ENCODE measurements at regions of chr12 and their contacts with region 1.

Region 1: DNA sequence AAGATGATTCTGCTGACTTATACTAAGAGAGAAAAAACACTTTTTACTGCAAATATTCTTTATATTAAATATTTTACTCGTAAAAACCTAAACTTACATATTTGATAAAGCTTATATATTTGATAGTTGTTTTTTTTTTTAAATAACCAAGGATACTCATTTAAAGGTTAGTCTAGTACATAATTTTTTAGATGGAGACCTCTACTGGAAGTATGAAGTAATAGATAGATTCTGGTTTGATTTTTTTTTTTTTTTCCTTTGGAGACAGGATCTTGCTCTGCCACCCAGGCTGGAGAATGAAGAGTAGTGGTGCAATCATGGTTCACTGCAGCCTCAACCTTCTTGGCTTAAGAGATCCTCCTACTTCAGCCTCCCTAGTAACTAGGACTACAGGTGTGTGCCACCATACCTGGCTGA is 16.4 kb downstream of the ARID2 start:
- DNase-seq: peak; percentile 25 to 45 (median 39)
- H3K4me3 ChIP-seq: no peak overlapping the region
- H3K27ac ChIP-seq: no peak overlapping the region
- H3K4me1 ChIP-seq: no peaks in the 10 kb centered on the region
- H3K27me3 ChIP-seq: no peaks in the 10 kb centered on the region

Region 2: GRCh38 chr12:45518291-45519235 is 227.3 kb before region 1 on chr12:
- CTCF ChIA-PET with region 1: no interaction called
- POLR2A ChIA-PET with region 1: no interaction called
- DNase-seq: peak in 2 of 3 donors; percentile 53 to 64
- H3K4me3 ChIP-seq: peak overlapping the region in 1 of 7 experiments; percentile 42
- H3K27ac ChIP-seq: no peak overlapping the region
- H3K4me1 ChIP-seq: peaks cover 0 to 10% (median 9%) of the 10 kb centered on the region in 4 experiments
- H3K27me3 ChIP-seq: no peaks in the 10 kb centered on the region

Region 3: DNA sequence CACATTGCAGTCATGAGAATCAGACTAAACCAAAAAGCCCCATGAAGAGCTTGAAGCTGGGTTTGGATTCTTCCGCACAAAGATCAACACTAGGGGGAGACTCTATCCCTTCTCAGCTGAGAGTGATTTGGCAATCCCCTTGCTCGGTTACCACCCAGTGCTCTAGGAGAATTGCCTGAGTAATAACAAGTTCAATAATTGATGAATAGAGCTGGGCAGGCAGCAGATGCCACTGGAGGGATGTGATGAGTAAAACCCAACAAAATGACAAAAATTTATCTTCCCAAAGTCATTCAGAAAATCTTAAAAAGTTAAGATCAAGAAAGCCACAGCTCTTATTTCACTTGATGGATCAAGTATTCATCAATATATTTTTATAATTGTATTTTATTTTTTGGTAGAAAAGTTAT is 202.0 kb before region 1 on chr12:
- CTCF ChIA-PET with region 1: interaction called, 52 read pairs
- POLR2A ChIA-PET with region 1: no interaction called
- DNase-seq: peak; percentile 85 to 90 (median 88)
- H3K4me3 ChIP-seq: no peak overlapping the region
- H3K27ac ChIP-seq: no peak overlapping the region
- H3K4me1 ChIP-seq: no peaks in the 10 kb centered on the region
- H3K27me3 ChIP-seq: no peaks in the 10 kb centered on the region

Region 4: DNA sequence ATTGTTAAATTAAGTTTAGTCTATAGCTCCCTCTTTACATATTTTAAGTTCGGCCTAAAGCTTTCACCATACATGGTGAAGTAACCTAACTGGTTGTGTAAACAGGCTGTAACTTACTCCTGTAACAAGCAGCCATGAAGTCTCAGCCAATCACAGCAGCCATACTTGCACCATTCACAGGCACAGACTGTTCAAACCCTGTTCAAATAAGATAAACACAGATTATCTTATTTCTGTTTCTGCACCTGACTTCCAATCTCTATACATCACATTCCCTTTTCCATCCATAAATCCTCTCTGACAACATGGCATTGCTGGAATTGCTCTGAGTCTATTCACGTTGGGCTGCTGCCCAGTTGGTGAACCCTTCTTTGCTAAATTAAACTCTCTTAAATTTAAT is 50.9 kb before region 1 on chr12:
- CTCF ChIA-PET with region 1: no interaction called
- POLR2A ChIA-PET with region 1: no interaction called
- DNase-seq: no peak
- H3K4me3 ChIP-seq: no peak overlapping the region
- H3K27ac ChIP-seq: no peak overlapping the region
- H3K4me1 ChIP-seq: no peaks in the 10 kb centered on the region
- H3K27me3 ChIP-seq: no peaks in the 10 kb centered on the region

Region 5: DNA sequence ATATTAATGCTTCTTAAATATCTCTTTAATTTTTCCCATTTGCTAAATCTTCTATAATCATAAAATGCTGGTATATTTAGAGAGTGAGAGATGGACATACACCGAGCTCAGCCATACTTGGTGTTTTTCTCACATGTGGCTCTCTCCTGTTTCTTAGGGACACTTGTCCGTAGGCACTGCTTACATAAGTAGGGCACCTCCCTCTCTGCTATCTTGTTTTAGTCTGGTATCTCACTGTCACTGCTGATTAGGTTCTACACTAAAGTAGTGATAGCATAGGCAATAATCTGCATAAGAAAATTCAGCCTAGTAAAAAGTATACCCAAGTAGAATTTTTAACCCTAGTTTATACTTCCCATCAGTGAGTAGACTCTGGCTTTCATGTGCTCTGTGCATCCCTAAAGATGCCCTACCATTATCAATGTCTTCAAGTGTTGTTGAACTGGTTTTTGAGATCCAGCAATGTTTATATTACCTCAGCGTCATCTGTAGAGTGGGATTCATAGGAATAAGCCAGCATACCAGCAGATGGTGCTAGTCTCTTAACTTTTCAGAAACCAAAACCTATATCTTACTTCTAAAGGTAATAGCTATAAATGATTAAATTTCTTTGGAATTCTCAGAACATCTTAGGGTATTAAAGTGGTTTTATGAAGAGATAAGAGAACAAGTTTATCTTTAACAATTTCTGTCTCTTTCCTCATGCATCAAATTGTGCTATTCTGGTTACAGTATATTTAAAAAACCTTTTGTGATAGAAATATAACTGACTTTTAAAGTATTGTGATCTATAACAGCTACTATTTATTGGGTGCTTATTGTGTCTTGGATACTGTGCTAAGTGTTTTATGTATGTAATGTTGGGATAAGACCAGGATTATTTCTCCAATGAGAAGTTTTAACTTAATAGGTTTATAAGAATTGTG is 16.6 kb after region 1 on chr12:
- CTCF ChIA-PET with region 1: interaction called, 10 read pairs
- POLR2A ChIA-PET with region 1: no interaction called
- DNase-seq: peak; percentile 52 to 67 (median 65)
- H3K4me3 ChIP-seq: no peak overlapping the region
- H3K27ac ChIP-seq: peak overlapping the region in 1 of 2 experiments; percentile 3
- H3K4me1 ChIP-seq: no peaks in the 10 kb centered on the region
- H3K27me3 ChIP-seq: no peaks in the 10 kb centered on the region

Region 6: GRCh38 chr12:45878630-45879255 is 132.9 kb after region 1 on chr12:
- CTCF ChIA-PET with region 1: no interaction called
- POLR2A ChIA-PET with region 1: no interaction called
- DNase-seq: peak; percentile 8 to 62 (median 52)
- H3K4me3 ChIP-seq: no peak overlapping the region
- H3K27ac ChIP-seq: peak overlapping the region; percentile 36 to 71
- H3K4me1 ChIP-seq: peaks cover 0 to 6% (median 3%) of the 10 kb centered on the region in 4 experiments
- H3K27me3 ChIP-seq: no peaks in the 10 kb centered on the region